Tibial artery (tissue), 4 donors: ENCODE measurements at regions of chr1 and their contacts with region 1.

Region 1: GRCh38 chr1:76238094-76238628 is 163.6 kb downstream of the ST6GALNAC3 start:
- DNase-seq: no peak
- H3K4me3 ChIP-seq: no peak overlapping the region
- H3K27ac ChIP-seq: no peak overlapping the region
- H3K4me1 ChIP-seq: peaks cover 0 to 26% (median 7%) of the 10 kb centered on the region in 4 donors
- H3K27me3 ChIP-seq: no peaks in the 10 kb centered on the region
- CTCF ChIP-seq: no peak

Region 2: GRCh38 chr1:76252431-76252830 is 14.3 kb after region 1 on chr1:
- intact Hi-C with region 1: loop called (anchors 2 kb)
- DNase-seq: no peak
- H3K4me3 ChIP-seq: no peak overlapping the region
- H3K27ac ChIP-seq: no peak overlapping the region
- H3K4me1 ChIP-seq: no peaks in the 10 kb centered on the region
- H3K27me3 ChIP-seq: no peaks in the 10 kb centered on the region
- CTCF ChIP-seq: no peak

Region 3: GRCh38 chr1:76294482-76295194 is 56.5 kb after region 1 on chr1:
- intact Hi-C with region 1: no loop called
- DNase-seq: no peak
- H3K4me3 ChIP-seq: no peak overlapping the region
- H3K27ac ChIP-seq: no peak overlapping the region
- H3K4me1 ChIP-seq: no peaks in the 10 kb centered on the region
- H3K27me3 ChIP-seq: no peaks in the 10 kb centered on the region
- CTCF ChIP-seq: no peak